ENCODE measurements at regions of chr7 and their contacts with region 1.

Region 1: DNA sequence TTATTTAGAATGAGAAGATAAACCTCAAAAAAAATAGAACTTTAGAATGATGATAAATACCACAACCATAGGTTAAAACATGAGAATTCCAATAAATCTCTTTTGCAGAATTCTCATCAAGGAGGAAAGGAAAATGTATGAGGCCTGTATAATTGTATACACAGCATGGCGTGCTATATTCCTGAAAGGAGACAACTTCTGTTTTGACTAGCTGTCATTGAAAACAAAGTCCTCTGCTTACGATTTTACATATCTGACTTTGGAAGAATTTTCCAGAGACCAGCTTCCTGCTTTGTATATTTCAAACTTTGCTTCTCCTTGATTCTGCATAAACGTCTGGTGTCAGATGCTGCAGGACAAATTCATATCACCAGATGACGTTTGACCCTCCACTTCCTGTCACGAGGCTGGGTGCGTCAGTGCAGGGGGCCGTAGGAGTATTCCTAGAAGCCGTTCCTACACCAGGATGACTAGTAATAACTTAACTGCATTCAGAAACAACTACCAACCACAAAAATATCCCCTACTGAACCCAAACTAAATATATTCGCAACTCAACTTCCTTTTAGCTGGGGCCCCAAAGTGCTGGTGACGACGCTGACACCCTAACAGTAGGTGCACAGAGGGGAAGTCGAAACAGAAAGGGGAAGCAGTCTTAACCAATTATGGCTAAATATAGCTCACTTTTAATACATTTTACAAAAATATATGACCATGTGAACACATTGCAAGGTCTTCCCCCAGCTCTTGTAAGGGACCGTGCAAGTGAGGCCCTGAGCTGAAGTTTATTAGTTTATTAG is 178.6 kb upstream of the INHBA start:
- DNase-seq: peak; percentile 75
- ATAC-seq: peak; percentile 88
- H3K4me3 Mint-ChIP-seq: peak overlapping the region; percentile 80
- H3K27ac Mint-ChIP-seq: peak overlapping the region; percentile 91
- H3K4me1 Mint-ChIP-seq: peaks cover 76% of the 10 kb centered on the region
- H3K27me3 Mint-ChIP-seq: no peaks in the 10 kb centered on the region
- CTCF ChIP-seq: no peak

Region 2: GRCh38 chr7:41292487-41292886 is 589.0 kb before region 1 on chr7:
- CTCF ChIA-PET with region 1: no interaction called
- POLR2A ChIA-PET with region 1: no interaction called
- intact Hi-C with region 1: no loop called
- DNase-seq: no peak
- ATAC-seq: no peak
- H3K4me3 Mint-ChIP-seq: no peak overlapping the region
- H3K27ac Mint-ChIP-seq: no peak overlapping the region
- H3K4me1 Mint-ChIP-seq: no peaks in the 10 kb centered on the region
- H3K27me3 Mint-ChIP-seq: no peaks in the 10 kb centered on the region
- CTCF ChIP-seq: no peak

Region 3: DNA sequence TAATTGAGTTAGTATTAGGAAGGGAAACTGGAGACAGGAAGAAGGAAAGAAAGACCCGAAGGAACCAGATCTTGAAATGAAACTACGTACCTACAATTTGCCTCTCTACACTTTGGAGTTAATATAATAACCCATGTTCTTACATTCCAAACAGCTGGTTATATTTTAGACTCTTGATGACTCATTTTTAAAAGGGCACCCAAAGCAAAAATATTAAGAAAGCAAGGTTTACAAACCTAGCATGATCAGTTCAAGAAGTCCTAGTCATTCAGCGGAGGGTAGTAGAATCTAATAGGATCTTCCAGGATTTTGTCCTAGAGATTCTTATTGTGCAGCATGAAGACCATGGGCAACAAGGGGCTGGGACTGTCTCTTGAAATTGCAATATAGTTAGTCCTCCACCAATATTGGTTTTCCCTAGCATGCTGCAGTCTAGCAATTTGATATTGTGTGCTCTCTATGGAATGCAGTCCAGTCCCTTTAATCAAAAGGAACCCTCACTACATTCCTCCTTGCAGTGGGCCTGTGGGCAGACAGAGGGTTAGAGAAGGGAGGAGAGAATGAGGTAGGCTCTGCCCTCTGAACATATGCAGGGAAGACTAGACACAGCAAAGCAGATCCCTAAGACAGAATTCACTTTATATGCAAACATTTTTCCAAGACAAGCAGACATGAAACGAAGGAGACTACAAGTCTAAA is 409.0 kb before region 1 on chr7:
- CTCF ChIA-PET with region 1: no interaction called
- POLR2A ChIA-PET with region 1: no interaction called
- intact Hi-C with region 1: loop called (anchors 10 kb)
- DNase-seq: no peak
- ATAC-seq: no peak
- H3K4me3 Mint-ChIP-seq: no peak overlapping the region
- H3K27ac Mint-ChIP-seq: no peak overlapping the region
- H3K4me1 Mint-ChIP-seq: peaks cover 14% of the 10 kb centered on the region
- H3K27me3 Mint-ChIP-seq: peaks cover 2% of the 10 kb centered on the region
- CTCF ChIP-seq: no peak

Region 4: DNA sequence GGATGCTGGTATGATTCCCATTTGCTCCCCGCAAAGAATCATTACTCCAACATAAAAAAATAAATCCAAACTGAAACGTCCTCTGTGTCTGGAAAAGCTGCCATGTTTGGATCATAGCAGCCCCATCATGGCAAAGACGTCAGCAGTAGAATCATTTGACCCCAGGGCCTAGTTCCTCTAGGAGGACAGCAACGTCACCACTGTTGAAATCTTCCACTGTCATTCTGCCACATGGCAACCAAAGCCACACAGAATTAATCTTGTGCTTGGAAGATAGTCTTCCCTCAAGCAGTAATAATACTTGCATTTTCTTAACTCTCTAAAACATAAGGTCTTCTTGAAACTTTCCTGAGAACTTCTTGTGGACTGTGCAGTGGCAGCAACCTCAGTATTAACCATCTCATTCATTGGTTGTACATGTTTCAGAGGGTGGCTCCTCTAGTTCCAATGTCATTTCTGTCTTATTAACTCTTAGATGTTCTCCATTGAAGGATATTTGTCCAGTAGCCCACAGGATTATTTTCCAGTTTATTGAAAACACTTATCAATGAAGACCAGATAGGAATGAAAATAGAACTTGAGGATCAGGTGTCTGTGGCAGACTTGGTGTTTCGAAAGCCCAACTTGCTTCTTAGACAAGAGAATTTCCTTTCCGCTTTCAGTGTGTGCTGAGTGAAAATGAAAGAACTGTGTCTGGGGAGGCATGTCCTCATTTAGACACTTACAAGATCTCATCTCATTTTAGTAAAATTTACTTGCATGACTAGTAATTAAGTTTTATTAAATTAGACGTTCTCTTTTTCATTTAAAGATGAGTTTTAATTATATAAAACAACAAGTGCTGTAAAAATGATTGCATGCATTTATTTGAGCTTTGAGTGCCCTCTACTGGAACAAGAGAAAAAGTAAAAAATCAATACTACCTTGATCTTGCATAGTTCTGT is 149.8 kb before region 1 on chr7:
- CTCF ChIA-PET with region 1: no interaction called
- POLR2A ChIA-PET with region 1: no interaction called
- intact Hi-C with region 1: loop called (anchors 1 kb)
- DNase-seq: no peak
- ATAC-seq: peak; percentile 25
- H3K4me3 Mint-ChIP-seq: peak overlapping the region; percentile 17
- H3K27ac Mint-ChIP-seq: no peak overlapping the region
- H3K4me1 Mint-ChIP-seq: peaks cover 15% of the 10 kb centered on the region
- H3K27me3 Mint-ChIP-seq: no peaks in the 10 kb centered on the region
- CTCF ChIP-seq: no peak

Region 5: DNA sequence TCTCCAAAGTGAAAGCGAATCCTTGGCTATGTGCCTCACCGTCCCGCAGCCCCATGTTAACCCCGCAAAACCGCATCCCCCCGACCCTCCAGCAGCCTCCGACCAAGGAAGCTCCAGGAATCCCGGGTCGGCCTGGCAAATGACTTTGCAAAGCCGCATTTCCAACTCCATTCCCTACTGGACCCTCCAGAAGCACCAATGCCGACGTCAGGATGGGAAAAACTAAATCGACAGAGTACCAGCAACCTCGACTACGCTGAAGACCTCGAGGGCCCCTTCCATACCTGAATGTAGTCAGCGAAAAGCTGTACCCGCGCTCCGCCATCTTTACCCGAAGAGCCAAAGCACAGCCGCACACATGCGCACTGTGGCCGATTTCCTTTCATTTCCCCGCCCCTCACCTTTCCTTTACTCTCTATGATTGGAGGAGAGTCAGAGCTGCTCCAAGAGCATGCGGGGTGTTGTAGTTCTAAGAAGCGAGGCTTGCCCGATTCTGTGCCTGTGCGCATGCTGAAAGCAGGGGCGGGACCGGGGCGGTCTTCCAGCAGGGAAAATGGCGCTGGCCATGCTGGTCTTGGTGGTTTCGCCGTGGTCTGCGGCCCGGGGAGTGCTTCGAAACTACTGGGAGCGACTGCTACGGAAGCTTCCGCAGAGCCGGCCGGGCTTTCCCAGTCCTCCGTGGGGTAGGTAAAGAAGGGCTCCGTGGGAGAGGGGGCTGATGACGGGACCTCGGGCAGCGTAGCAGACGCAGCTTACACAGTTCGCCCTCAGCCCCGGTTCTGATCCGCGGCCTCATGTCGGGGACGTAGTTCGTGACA is 1050.5 kb after region 1 on chr7 and contains the starts of genes MRPL32 and PSMA2:
- CTCF ChIA-PET with region 1: no interaction called
- POLR2A ChIA-PET with region 1: interaction called, 6 read pairs
- intact Hi-C with region 1: loop called (anchors 5 kb)
- DNase-seq: peak; percentile 88
- ATAC-seq: peak; percentile 100
- H3K4me3 Mint-ChIP-seq: peak within 1 kb of the TSS; percentile 100
- H3K27ac Mint-ChIP-seq: peak within 1 kb of the TSS; percentile 97
- H3K4me1 Mint-ChIP-seq: peaks cover 57% of the 10 kb centered on the region
- H3K27me3 Mint-ChIP-seq: no peaks in the 10 kb centered on the region
- CTCF ChIP-seq: no peak
- total RNA-seq, gene MRPL32: 38.8 and 39.5 TPM in 2 replicates
- total RNA-seq, gene PSMA2: 88.1 and 109 TPM in 2 replicates

Region 6: GRCh38 chr7:43869006-43869866 is 1987.7 kb after region 1 on chr7 and contains the start of gene MRPS24:
- CTCF ChIA-PET with region 1: no interaction called
- POLR2A ChIA-PET with region 1: interaction called, 3 read pairs
- intact Hi-C with region 1: loop called (anchors 5 kb)
- DNase-seq: peak; percentile 85
- ATAC-seq: peak; percentile 98
- H3K4me3 Mint-ChIP-seq: peak within 1 kb of the TSS; percentile 93
- H3K27ac Mint-ChIP-seq: peak within 1 kb of the TSS; percentile 89
- H3K4me1 Mint-ChIP-seq: peaks cover 21% of the 10 kb centered on the region
- H3K27me3 Mint-ChIP-seq: no peaks in the 10 kb centered on the region
- CTCF ChIP-seq: no peak
- total RNA-seq, gene MRPS24: 73.1 and 78.1 TPM in 2 replicates